T-cell (primary cell): ENCODE measurements at regions of chr10 and their contacts with region 1.

Region 1: DNA sequence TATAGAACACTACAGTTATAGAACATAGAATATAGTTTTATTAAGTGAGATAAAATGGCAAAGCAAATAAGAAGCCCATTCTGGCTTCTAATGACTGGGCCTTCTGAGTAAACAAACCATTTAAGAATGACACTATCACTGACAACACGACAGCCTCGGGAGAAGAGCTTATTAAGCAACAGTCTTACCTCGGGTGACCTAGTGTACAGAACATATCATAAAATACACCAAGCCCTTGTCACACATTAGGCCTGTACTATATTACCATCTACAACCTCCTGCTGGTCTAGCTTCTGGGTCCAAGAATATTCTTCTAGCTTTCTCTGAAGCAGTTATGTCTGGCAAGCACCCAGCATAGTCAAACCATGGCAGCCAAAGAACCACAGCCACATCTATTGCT is 32.0 kb downstream of the CCDC186 start:
- DNase-seq: no peak
- ATAC-seq: no peak
- H3K4me3 ChIP-seq: no peak overlapping the region
- H3K4me3 Mint-ChIP-seq: no peak overlapping the region
- H3K27ac ChIP-seq: no peak overlapping the region
- H3K27ac Mint-ChIP-seq: no peak overlapping the region
- H3K4me1 ChIP-seq: no peaks in the 10 kb centered on the region
- H3K4me1 Mint-ChIP-seq: peaks cover 0 to 6% (median 0%) of the 10 kb centered on the region in 3 donors
- H3K27me3 ChIP-seq: no peaks in the 10 kb centered on the region
- H3K27me3 Mint-ChIP-seq: no peaks in the 10 kb centered on the region

Region 2: DNA sequence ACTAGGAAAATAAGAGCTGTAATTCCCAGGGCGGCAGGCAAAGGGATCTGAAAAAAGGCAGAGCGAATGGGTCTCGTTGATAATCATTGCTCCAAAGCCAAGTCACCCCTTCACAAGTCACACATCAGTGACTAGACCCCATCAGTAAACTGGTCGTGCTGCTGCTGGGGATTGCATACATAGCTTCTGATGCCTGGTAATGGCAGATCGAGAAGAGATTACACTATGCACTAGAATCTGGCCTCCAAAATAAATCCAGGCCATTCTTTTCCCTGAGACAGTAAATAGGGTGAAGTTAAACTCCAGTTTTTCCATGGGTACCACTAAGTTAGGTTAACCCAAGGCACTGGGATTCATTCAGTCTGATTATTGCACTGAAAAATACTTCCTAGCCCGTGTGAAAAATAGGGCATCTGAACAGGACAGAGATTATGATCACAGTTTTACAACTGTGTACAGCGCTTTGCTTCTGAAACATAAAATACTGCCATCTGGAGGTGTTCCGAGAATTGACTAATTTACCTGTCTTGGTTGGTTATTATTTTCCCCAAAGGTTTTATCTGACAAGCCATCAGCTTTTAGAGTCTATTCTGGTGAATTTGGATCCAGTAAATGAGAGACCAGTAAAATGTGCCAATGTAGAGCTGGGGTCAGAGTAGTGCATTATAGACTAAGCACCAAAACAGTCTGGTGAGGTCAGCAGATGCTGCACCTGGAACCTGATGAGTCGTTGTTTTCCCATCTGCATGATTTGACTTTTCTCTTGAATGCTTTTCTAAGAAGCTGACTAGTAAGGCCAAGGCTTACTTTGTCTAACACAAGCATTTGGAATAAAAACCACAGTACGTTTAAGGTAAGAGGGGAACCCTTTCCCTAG is 345.2 kb after region 1 on chr10:
- CTCF ChIA-PET with region 1: interaction called in 1 of 2 experiments, 10 read pairs
- POLR2A ChIA-PET with region 1: no interaction called
- DNase-seq: no peak
- ATAC-seq: peak in 2 of 4 experiments; percentile 30 to 32
- H3K4me3 ChIP-seq: no peak overlapping the region
- H3K4me3 Mint-ChIP-seq: no peak overlapping the region
- H3K27ac ChIP-seq: no peak overlapping the region
- H3K27ac Mint-ChIP-seq: peak overlapping the region in 1 of 2 donors; percentile 46
- H3K4me1 ChIP-seq: peaks cover 17% of the 10 kb centered on the region in 2 experiments
- H3K4me1 Mint-ChIP-seq: peaks cover 65 to 76% (median 66%) of the 10 kb centered on the region in 3 donors
- H3K27me3 ChIP-seq: no peaks in the 10 kb centered on the region
- H3K27me3 Mint-ChIP-seq: no peaks in the 10 kb centered on the region